Activated CD4-positive, alpha-beta memory T cell treated with anti-CD3 and anti-CD28 coated beads, Interleukin-2, amount 10 ng/mL, durations not matched to agents 7 days and 5 days (primary cell): ENCODE measurements at regions of chr19 and their contacts with region 1.

Region 1: GRCh38 chr19:14419106-14419813 is at the start of gene DDX39A:
- DNase-seq: peak; percentile 99
- H3K4me3 Mint-ChIP-seq: peak within 1 kb of the TSS; percentile 88
- H3K27ac Mint-ChIP-seq: peak within 1 kb of the TSS; percentile 96
- H3K4me1 Mint-ChIP-seq: peaks cover 34% of the 10 kb centered on the region
- H3K27me3 Mint-ChIP-seq: no peaks in the 10 kb centered on the region
- total RNA-seq, gene DDX39A: 233 to 234 TPM

Region 2: GRCh38 chr19:14405758-14406644 is 13.3 kb before region 1 on chr19:
- CTCF ChIA-PET with region 1: interaction called, 15 read pairs
- POLR2A ChIA-PET with region 1: interaction called, 117 read pairs
- DNase-seq: peak; percentile 92
- H3K4me3 Mint-ChIP-seq: no peak overlapping the region
- H3K27ac Mint-ChIP-seq: peak overlapping the region; percentile 68
- H3K4me1 Mint-ChIP-seq: peaks cover 45% of the 10 kb centered on the region
- H3K27me3 Mint-ChIP-seq: no peaks in the 10 kb centered on the region

Region 3: DNA sequence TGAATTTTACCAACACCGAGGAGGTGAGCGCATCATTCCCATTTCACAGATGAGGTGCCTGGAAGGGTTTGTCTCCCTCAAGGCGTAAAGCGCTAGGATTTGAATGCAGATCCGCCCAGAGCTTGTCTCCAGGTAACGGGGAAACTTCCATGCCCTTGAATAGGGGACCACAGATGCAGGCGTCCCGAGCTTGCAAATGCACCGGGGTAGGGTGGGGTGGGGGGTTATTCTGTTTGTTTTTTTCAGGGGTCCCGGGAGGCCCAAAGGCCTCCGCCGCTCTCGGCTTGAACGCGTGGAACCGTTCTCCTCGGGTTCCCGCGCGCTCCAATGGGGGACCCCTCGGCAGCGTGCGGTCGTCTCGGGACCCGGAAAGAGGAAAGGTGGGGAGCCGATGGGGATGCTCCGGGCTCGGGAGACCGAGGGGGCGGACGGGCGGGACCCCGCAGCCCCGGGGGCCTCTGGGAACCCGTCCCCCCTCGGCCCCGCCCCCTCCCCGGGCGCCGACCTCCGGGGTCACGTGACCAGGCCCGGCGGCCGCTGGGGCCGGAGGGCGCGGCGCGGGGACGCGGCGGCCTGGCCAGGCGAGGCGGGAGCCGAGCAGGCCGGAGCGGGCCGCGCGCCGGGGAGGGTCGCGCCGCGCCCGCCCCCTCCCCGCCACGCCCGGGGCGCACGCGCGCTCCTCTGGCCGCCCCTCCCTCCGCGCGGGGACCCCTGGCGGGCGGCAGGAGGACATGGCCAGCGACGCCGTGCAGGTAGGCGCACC is 13.7 kb after region 1 on chr19 and contains the start of gene PKN1:
- CTCF ChIA-PET with region 1: interaction called, 25 read pairs
- POLR2A ChIA-PET with region 1: interaction called, 28 read pairs
- DNase-seq: peak; percentile 58
- H3K4me3 Mint-ChIP-seq: peak within 1 kb of the TSS; percentile 76
- H3K27ac Mint-ChIP-seq: peak within 1 kb of the TSS; percentile 74
- H3K4me1 Mint-ChIP-seq: peaks cover 39% of the 10 kb centered on the region
- H3K27me3 Mint-ChIP-seq: peaks cover 10% of the 10 kb centered on the region
- total RNA-seq, gene PKN1: 219 to 232 TPM

Region 4: DNA sequence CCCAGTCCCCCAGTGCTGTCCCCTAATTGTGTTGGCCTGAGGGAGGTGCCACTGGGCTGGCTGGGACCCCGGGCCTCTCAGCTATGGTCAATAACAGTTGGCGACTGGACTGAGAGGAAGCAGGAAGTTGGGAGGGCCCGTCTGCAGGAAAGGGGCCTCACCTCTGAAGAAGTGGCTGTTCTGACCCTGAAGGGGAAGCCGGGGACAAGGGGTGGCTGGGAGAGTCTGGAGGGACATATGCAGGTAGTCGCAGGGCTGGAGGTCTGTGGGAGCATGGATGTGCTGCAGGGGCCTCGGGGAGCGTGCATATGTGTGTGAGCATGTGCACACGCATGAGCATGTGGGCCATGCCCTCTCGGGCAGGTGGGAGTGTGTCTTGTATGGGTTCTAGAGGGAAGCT is 19.8 kb after region 1 on chr19:
- CTCF ChIA-PET with region 1: no interaction called
- POLR2A ChIA-PET with region 1: interaction called, 16 read pairs
- DNase-seq: no peak
- H3K4me3 Mint-ChIP-seq: peak overlapping the region; percentile 59
- H3K27ac Mint-ChIP-seq: peak overlapping the region; percentile 90
- H3K4me1 Mint-ChIP-seq: peaks cover 59% of the 10 kb centered on the region
- H3K27me3 Mint-ChIP-seq: no peaks in the 10 kb centered on the region